ENCODE measurements at regions of chr12 and their contacts with region 1.

Region 1: GRCh38 chr12:113358381-113359132 is at the start of gene PLBD2:
- DNase-seq: peak; percentile 96
- total RNA-seq, gene PLBD2: 30.8 TPM

Region 2: DNA sequence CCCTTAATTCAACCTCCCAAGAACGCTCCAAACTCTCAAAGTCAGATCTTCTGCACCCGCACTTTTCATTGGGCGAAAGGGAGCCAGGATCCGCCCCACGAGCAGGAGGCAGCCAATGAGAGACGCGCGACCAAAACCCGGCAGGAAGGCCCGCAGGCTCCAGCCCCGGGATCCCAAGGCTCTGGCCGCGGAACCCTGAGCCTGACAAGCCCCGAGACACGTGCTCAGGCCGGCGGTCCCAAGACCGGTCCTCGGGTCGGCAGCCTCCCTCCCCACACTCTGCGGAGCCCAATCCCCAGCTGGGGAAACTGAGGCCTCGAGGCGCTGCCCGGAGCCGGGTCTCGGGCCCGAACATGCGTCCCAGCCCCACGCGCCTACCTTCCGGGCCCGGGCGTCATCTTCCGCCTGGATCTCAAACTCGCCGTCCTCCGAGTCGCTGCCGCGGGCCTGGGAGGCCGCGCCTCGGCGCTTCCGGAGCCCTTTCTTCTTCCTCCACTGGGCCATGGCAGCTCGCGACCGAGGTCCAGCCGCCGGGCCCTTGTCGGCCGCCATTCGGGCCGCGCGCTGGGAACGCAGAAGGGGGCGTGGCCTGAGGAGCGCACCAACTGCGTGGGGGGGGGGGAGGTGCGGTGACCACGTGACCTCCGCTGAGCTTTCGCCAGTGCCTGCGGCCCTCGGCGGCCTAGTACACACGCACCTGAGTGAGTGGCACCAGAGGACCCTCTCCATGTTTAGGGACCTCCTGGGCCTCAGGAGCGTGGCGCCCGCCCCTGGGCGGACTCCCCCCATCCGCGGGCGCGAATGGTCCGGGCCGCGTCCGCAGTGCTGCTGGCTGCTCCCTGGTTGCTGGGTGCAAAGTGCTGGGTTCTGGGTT is 173.4 kb before region 1 on chr12 and contains the starts of genes DDX54 and RITA1:
- intact Hi-C with region 1: loop called (anchors 5 kb)
- DNase-seq: peak; percentile 96
- total RNA-seq, gene DDX54: 35.5 TPM
- total RNA-seq, gene RITA1: 11.0 TPM

Region 3: DNA sequence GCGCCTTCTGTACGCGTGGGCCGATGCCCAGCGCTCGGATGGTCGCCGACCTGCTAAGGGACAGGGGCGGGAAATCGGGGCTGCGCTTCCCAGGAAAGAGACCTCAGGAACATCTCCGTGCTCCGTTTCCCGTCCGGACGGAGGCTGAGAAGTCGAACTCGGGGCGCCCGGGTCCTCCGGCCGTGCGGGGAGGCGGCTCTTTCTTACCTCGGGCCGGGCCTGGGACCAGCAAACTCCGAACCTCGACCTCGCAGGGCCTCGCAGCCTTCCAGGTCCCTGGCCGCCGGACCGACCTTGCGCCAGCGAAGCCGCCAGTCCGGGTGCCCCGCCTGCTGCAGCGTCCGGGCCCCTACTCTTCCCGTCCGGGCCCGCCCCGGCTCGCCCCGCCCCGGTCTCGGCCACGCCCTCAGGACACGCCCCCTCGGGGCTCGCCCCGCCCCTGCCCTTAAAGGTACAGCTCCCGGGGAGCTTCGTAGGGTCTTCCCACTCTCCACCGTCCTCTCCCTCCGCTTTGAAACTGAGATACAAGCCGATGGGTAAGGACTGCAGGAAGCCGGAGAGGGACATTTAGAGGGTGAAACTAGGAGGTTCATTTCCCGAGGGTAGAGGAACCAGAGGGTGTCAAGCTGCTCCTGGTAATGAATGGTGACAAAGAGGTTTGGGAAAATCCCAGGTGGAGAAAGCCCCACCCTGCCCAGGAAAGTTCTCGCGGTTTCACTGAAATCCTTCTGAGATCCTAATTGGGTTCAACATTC is 23.6 kb before region 1 on chr12 and contains the start of gene SLC8B1:
- intact Hi-C with region 1: loop called (anchors 1 kb)
- DNase-seq: peak; percentile 97
- total RNA-seq, gene SLC8B1: 11.0 TPM

Measured in cardiac septum (tissue), 1 donor.